AG04450 (cell line): ENCODE measurements at regions of chr9 and their contacts with region 1.

Region 1: DNA sequence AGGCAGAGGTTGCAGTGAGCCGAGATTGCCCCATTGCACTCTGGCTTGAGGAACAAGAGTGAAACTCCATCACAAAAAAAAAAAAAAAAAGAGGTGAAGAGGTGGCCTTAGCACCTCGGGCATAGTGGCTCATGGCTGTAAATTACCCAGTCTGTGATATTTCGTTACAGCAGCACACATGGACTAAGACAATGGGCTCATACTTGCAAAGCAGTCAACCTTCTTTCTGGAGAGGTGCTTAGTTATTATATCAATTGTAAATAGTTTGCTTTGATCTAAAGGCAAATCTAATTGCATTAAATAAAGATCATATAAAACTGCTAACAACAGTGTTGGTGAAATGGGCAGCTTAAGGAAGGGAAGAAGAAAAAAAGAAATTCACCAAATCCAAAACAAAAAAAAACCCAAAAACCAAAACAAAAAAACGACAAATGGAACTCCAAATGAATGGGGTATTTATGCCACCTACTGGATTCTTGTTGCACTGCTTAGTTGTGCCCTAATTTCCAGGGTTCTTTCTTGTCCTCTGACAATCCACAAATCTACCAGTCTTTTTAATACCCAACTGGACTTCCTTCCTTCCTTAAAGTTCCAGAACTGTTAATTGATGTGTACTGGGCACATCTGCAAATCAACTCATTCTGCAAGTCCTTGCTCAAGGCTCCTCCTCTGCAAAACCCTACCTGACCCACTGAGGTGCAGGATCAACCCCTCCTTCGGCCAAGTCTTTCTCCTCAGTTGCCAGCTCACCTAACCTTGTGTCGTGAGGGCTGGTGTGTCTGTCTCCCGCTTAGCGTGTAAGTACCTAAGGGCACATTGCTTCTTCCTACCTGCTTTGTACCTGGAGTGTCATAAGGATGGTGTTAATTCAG is 35.0 kb upstream of the DMRT1 start:
- DNase-seq: peak; percentile 29
- H3K4me3 ChIP-seq: no peak overlapping the region
- H3K27ac ChIP-seq: no peak overlapping the region
- H3K27me3 ChIP-seq: no peaks in the 10 kb centered on the region
- CTCF ChIP-seq: peak; percentile 84

Region 2: DNA sequence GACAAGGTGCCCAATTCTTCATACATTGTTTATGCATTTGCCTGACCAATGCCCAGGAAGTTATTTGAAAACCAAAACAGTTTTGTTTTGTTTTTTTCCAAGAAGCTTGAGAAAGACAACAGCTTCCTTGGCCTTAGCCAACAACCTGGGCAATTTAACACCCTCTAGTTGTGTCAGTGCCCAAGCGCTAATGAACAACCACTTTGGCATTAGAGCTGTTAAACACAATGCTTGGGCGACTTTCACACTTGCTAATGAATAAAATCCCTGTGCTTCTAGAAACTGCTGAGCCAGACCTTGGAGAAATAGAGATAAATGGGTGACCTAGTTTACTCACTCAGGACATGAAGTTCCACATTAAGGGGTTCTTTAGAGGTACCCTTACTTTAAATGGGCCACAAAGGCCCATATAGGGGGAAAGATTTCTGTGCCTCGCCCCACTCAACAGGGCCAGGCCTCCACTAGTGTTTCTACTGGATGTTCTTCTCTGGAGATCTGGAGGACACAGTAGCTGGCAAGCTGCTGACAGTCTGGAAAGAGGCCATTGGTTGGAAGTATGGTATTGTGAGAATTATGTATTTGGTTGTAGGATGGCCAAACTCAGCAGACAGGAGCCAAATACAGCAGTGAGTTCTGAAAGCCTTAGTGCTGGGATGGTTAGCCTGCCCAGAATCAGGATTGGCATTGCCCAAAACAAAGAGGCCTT is 412.0 kb before region 1 on chr9:
- CTCF ChIA-PET with region 1: no interaction called
- POLR2A ChIA-PET with region 1: interaction called, 12 read pairs
- DNase-seq: no peak
- H3K4me3 ChIP-seq: no peak overlapping the region
- H3K27ac ChIP-seq: no peak overlapping the region
- H3K27me3 ChIP-seq: no peaks in the 10 kb centered on the region
- CTCF ChIP-seq: no peak

Region 3: DNA sequence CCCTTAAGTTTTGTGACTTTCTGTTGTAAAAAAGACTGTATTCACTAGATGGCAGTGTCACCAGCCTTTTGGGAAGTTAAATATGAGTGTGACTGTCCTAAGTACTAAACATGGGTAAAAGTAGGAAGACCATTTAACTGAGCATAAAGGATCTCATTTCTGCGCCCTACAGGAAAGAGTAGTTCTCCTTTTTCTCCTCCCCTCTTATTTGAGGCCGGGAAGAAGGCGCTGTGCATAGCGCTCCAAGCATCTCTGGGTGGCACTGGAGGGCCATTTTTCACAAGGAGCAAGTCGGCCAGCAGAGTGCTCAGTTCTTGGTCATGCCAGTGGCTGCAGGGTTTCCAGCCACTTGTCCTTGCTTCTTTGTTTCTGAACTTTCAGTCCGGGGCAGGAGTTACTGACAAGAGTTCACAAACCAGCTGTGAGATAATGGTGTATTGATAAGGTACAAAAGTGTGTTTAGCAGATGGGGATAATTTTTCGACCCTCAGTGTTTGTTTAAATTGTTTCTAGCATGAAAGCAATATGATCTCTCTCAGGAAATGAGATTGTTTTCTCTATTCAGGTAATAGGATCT is 192.7 kb before region 1 on chr9:
- CTCF ChIA-PET with region 1: interaction called, 131 read pairs
- POLR2A ChIA-PET with region 1: no interaction called
- DNase-seq: peak; percentile 83
- H3K4me3 ChIP-seq: no peak overlapping the region
- H3K27ac ChIP-seq: no peak overlapping the region
- H3K27me3 ChIP-seq: no peaks in the 10 kb centered on the region
- CTCF ChIP-seq: peak; percentile 94

Region 4: GRCh38 chr9:621201-621855 is 185.2 kb before region 1 on chr9:
- CTCF ChIA-PET with region 1: interaction called, 131 read pairs
- POLR2A ChIA-PET with region 1: no interaction called
- DNase-seq: no peak
- H3K4me3 ChIP-seq: no peak overlapping the region
- H3K27ac ChIP-seq: no peak overlapping the region
- H3K27me3 ChIP-seq: no peaks in the 10 kb centered on the region
- CTCF ChIP-seq: no peak

Region 5: DNA sequence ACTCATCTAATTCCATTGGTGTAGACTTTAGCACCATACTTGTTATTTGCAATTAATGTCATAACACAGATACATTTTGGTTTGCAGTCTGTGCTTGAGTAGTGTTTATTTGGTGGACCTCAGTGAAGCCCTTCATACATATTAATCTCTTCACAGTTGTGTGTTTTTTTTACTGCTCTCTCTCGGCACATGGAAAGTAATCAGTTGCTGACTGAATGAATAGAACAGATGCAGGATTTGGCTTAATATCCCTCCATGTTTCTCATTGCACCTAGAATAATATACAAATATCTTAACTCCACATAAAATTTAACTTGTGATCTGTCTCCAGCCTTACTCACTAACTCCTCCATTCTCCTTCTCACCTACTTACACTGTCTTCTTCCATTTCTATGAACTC is 562.8 kb after region 1 on chr9:
- CTCF ChIA-PET with region 1: no interaction called
- POLR2A ChIA-PET with region 1: no interaction called
- DNase-seq: no peak
- H3K4me3 ChIP-seq: no peak overlapping the region
- H3K27ac ChIP-seq: no peak overlapping the region
- H3K27me3 ChIP-seq: no peaks in the 10 kb centered on the region
- CTCF ChIP-seq: no peak